Right lobe of liver (tissue), 6 donors: ENCODE measurements at regions of chr14 and their contacts with region 1.

Region 1: DNA sequence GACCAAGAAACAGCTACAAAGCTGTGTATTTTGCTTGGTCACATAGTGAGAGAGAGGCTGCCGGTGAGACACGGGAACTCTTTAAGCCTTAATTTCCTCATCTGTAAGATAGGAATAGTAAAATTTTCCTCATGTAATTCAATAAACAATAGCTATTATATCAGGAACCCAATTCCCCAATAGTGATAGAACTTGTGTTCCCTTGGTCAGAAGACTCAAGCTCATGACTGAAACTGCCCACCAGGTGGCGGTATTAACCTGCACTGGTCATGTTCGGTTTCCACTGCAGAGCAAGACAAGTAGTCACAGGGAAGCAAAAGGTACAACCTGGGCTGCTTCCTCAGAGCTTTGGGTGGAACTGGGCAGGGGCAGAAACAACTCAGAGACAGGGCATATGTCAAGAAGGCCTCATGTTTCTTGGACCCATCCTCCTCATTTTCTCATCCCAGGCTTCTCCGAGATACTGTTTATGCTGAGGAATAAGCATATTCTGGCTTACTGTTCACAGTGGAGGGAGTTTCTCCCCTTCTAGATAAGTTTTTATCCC is 4.2 kb upstream of the AJUBA start:
- DNase-seq: peak; percentile 80 to 87 (median 82)
- ATAC-seq: peak; percentile 64 to 73 (median 69)
- H3K4me3 ChIP-seq: no peak overlapping the region
- H3K27ac ChIP-seq: no peak overlapping the region
- H3K4me1 ChIP-seq: peaks cover 0 to 24% (median 5%) of the 10 kb centered on the region in 4 donors
- H3K27me3 ChIP-seq: no peaks in the 10 kb centered on the region
- CTCF ChIP-seq: peak; percentile 92 to 94 (median 92)
- POLR2A ChIP-seq: no peak

Region 2: GRCh38 chr14:22886500-22887259 is 99.9 kb before region 1 on chr14:
- intact Hi-C with region 1: no loop called
- DNase-seq: peak in 1 of 3 donors; percentile 47
- ATAC-seq: peak; percentile 55 to 68 (median 57)
- H3K4me3 ChIP-seq: peak overlapping the region; percentile 32 to 48 (median 41)
- H3K27ac ChIP-seq: peak overlapping the region in 1 of 3 donors; percentile 33
- H3K4me1 ChIP-seq: no peaks in the 10 kb centered on the region
- H3K27me3 ChIP-seq: no peaks in the 10 kb centered on the region
- CTCF ChIP-seq: no peak
- POLR2A ChIP-seq: no peak

Region 3: DNA sequence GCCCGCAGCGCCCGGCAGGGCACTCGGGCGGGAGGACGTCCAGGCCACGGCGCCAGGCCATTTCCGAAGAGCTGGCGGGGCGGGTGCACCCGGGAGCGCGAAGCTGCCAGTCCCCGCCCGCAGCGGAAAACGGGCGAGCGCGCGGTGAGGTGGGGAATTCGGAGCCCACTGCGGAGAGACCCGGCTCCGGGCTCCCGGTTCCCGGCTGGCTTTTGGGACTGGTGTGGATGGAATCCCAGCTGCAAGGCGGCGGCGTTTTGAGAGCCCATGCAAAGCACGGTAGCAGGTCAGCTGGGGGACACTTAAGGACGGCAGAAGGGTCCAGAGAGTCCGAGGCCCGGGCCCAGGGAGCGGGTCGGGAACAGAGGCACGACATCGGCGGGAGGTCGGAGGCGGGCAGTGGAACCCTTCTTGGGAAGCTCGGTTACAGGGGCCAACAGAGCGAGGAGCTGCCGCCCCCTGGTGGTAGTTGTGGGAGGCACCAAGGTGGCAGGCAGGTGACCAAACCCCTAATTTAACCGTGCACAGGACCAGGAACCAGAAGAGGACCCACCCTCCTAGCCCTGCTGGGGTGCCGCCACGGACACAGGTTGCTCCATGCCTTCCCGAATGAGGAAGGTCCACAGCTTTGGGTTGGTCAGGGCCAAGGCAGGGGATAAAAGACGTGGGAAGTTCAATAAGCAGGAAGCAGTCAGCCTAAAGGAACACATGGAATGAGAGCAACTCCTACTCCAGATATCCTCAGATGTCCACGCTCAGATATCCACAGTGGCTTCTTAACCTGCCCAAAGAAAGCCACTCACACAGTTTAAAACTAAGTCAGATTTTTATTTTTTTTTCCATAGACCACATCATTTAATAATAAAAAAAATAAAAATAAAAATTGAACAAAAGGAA is 71.4 kb after region 1 on chr14:
- intact Hi-C with region 1: loop called (anchors 5 kb)
- DNase-seq: peak; percentile 86 to 90 (median 87)
- ATAC-seq: peak; percentile 82 to 90 (median 86)
- H3K4me3 ChIP-seq: peak overlapping the region; percentile 61 to 65 (median 64)
- H3K27ac ChIP-seq: peak overlapping the region in 2 of 3 donors; percentile 41 to 43
- H3K4me1 ChIP-seq: peaks cover 0 to 6% (median 0%) of the 10 kb centered on the region in 4 donors
- H3K27me3 ChIP-seq: no peaks in the 10 kb centered on the region
- CTCF ChIP-seq: peak; percentile 90 to 96 (median 95)
- POLR2A ChIP-seq: no peak

Region 4: DNA sequence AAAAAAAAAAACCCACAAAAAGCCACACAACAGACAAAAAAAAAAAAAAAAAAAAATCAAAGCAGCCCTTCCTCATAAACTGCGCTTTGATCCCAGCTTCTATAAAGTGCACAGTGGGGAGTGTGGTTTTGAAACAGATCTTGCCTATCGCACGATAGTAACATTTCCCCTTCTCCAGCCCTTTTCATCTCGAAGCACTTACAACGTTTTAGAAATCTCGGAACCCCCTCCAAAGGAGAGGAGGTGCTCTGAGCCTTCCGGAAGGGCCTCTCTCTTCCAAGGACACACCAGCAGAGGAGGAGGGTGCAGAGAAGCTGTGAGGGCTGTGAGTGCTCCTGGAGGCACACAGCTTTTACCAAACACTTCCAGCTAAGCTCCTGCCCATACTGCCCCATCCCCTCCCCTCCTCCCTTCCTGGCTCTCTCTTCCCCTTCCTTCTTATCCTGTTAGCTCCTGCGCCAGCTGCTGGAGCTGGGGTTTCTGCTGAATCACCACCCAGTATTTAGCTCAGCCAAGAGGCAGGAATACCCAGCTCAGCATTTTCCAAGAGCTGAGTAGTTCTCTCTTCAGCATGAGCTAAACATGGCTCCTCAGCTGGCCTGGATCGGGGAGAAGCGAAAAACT is 168.5 kb after region 1 on chr14:
- intact Hi-C with region 1: no loop called
- DNase-seq: peak in 1 of 3 donors; percentile 41
- ATAC-seq: peak; percentile 65 to 72 (median 69)
- H3K4me3 ChIP-seq: no peak overlapping the region
- H3K27ac ChIP-seq: peak overlapping the region in 2 of 3 donors; percentile 3 to 39
- H3K4me1 ChIP-seq: no peaks in the 10 kb centered on the region
- H3K27me3 ChIP-seq: no peaks in the 10 kb centered on the region
- CTCF ChIP-seq: no peak
- POLR2A ChIP-seq: no peak